ENCODE measurements at regions of chr7 and their contacts with region 1.

Region 1: GRCh38 chr7:102412548-102412947 is 16.4 kb downstream of the PRKRIP1 start:
- DNase-seq: peak; percentile 63
- H3K4me3 ChIP-seq: no peak overlapping the region
- H3K27ac ChIP-seq: peak overlapping the region; percentile 15
- H3K4me1 ChIP-seq: peaks cover 69% of the 10 kb centered on the region
- CTCF ChIP-seq: peak; percentile 85

Region 2: GRCh38 chr7:102012996-102013461 is 399.5 kb before region 1 on chr7:
- CTCF ChIA-PET with region 1: no interaction called
- POLR2A ChIA-PET with region 1: no interaction called
- intact Hi-C with region 1: no loop called
- DNase-seq: no peak
- H3K4me3 ChIP-seq: no peak overlapping the region
- H3K27ac ChIP-seq: no peak overlapping the region
- H3K4me1 ChIP-seq: no peaks in the 10 kb centered on the region
- CTCF ChIP-seq: no peak

Region 3: GRCh38 chr7:102425639-102426267 is 13.2 kb after region 1 on chr7:
- CTCF ChIA-PET with region 1: interaction called, 4 read pairs
- POLR2A ChIA-PET with region 1: interaction called, 32 read pairs
- intact Hi-C with region 1: loop called (anchors 1 kb)
- DNase-seq: peak; percentile 94
- H3K4me3 ChIP-seq: peak overlapping the region; percentile 52
- H3K27ac ChIP-seq: peak overlapping the region; percentile 97
- H3K4me1 ChIP-seq: peaks cover 96% of the 10 kb centered on the region
- CTCF ChIP-seq: no peak

Region 4: GRCh38 chr7:102433219-102434038 is 20.9 kb after region 1 on chr7 and contains the start of gene ORAI2:
- CTCF ChIA-PET with region 1: interaction called, 6 read pairs
- POLR2A ChIA-PET with region 1: interaction called, 32 read pairs
- intact Hi-C with region 1: loop called (anchors 1 kb)
- DNase-seq: peak; percentile 89
- H3K4me3 ChIP-seq: peak within 1 kb of the TSS; percentile 80
- H3K27ac ChIP-seq: peak within 1 kb of the TSS; percentile 94
- H3K4me1 ChIP-seq: peaks cover 68% of the 10 kb centered on the region
- CTCF ChIP-seq: 0 out of 2 replicates have a peak, but pooled peaks have one; percentile 28
- total RNA-seq, gene ORAI2: 130 and 149 TPM in 2 replicates

Measured in OCI-LY7 (cell line).